K562 (cell line): ENCODE measurements at regions of chr9 and their contacts with region 1.

Region 1: GRCh38 chr9:128643519-128644300 is 12.9 kb downstream of the DYNC2I2 start:
- DNase-seq: no peak
- ATAC-seq: no peak; the same call in 2 of the 3 replicates
- H3K4me3 ChIP-seq: no peak overlapping the region
- H3K27ac ChIP-seq: no peak overlapping the region
- H3K4me1 ChIP-seq: peaks cover 0 to 5% of the 10 kb centered on the region in 2 experiments; a peak in 2 of 5 replicates
- H3K27me3 ChIP-seq: no peaks in the 10 kb centered on the region
- CTCF ChIP-seq: no peak
- EP300 ChIP-seq: no peak
- POLR2A ChIP-seq: no peak
- RAD21 ChIP-seq: no peak

Region 2: DNA sequence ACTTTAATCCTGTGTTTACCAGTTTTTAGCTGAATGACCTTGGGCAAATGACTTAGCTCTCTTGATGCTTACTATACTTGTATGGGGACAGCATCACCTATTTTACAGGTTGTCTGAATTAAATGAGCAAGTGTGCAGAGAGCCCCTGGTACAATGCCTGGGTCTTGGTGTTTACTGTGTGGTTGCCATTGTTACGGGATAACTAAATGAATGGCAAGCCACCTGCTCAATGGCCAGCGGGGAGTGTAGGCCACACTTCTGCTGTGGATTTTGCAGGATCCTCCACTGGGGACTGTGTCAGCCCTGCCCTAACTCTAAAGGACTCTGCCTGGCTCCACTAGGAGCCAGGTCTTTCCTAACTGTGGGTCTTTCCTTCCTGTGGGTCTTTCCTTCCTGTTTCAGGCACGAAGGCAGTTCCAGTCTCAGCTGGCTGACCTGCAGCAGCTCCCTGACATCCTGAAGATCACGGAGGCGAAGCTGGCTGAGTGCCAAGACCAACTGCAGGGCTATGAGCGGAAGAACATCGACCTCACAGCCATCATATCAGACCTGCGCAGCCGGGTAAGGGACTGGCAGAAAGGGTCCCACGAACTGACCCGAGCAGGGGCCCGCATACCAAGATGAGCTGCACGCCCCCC is 149.5 kb before region 1 on chr9:
- CTCF ChIA-PET with region 1: no interaction called
- POLR2A ChIA-PET with region 1: no interaction called
- in situ Hi-C with region 1: no loop called
- intact Hi-C with region 1: no loop called
- DNase-seq: peak; percentile 49 to 89 (median 65)
- ATAC-seq: peak; percentile 87
- H3K4me3 ChIP-seq: no peak overlapping the region
- H3K27ac ChIP-seq: peak overlapping the region; percentile 66
- H3K4me1 ChIP-seq: peaks cover 12 to 17% of the 10 kb centered on the region in 2 experiments
- H3K27me3 ChIP-seq: no peaks in the 10 kb centered on the region
- CTCF ChIP-seq: no peak
- EP300 ChIP-seq: peak; percentile 14; the same call in 1 of the 2 replicates
- POLR2A ChIP-seq: no peak
- RAD21 ChIP-seq: 0 out of 4 replicates have a peak, but pooled peaks of 1 of the 2 experiments have one; percentile 23

Region 3: GRCh38 chr9:128619099-128619498 is 24.6 kb before region 1 on chr9:
- CTCF ChIA-PET with region 1: no interaction called
- POLR2A ChIA-PET with region 1: no interaction called
- in situ Hi-C with region 1: no loop called
- intact Hi-C with region 1: no loop called
- DNase-seq: no peak
- ATAC-seq: no peak
- H3K4me3 ChIP-seq: no peak overlapping the region
- H3K27ac ChIP-seq: no peak overlapping the region
- H3K4me1 ChIP-seq: 0 out of 5 replicates have a peak, but pooled peaks cover 0 to 3% of the 10 kb centered on the region in 2 experiments
- H3K27me3 ChIP-seq: no peaks in the 10 kb centered on the region
- CTCF ChIP-seq: no peak
- EP300 ChIP-seq: no peak
- POLR2A ChIP-seq: no peak
- RAD21 ChIP-seq: no peak

Region 4: GRCh38 chr9:128702445-128702948 is 58.8 kb after region 1 on chr9 and contains the start of gene PKN3:
- CTCF ChIA-PET with region 1: no interaction called
- POLR2A ChIA-PET with region 1: no interaction called
- in situ Hi-C with region 1: no loop called
- intact Hi-C with region 1: loop called (anchors 5 kb)
- DNase-seq: peak; percentile 90 to 97 (median 92)
- ATAC-seq: peak; percentile 91
- H3K4me3 ChIP-seq: peak within 1 kb of the TSS; percentile 69
- H3K27ac ChIP-seq: peak within 1 kb of the TSS; percentile 71
- H3K4me1 ChIP-seq: peaks cover 9 to 43% of the 10 kb centered on the region in 2 experiments
- H3K27me3 ChIP-seq: no peaks in the 10 kb centered on the region
- CTCF ChIP-seq: peak; percentile 73 to 96 (median 89)
- EP300 ChIP-seq: no peak; the same call in 1 of the 2 replicates
- POLR2A ChIP-seq: peak; percentile 75
- RAD21 ChIP-seq: peak; percentile 57 to 58
- polyA plus RNA-seq, gene PKN3: 0.82 to 1.4 TPM

Region 5: GRCh38 chr9:128712451-128713410 is 69.0 kb after region 1 on chr9:
- CTCF ChIA-PET with region 1: no interaction called
- POLR2A ChIA-PET with region 1: no interaction called
- in situ Hi-C with region 1: loop called (anchors 5 kb)
- intact Hi-C with region 1: no loop called
- DNase-seq: no peak
- ATAC-seq: no peak; the same call in 2 of the 3 replicates
- H3K4me3 ChIP-seq: no peak overlapping the region
- H3K27ac ChIP-seq: no peak overlapping the region
- H3K4me1 ChIP-seq: no peaks in the 10 kb centered on the region; a peak in 1 of 5 replicates
- H3K27me3 ChIP-seq: no peaks in the 10 kb centered on the region
- CTCF ChIP-seq: no peak
- EP300 ChIP-seq: no peak
- POLR2A ChIP-seq: no peak
- RAD21 ChIP-seq: no peak